Psoas muscle (tissue), 8 donors: ENCODE measurements at regions of chr3 and their contacts with region 1.

Region 1: GRCh38 chr3:10370429-10370828 is 49.5 kb upstream of the SEC13 start:
- DNase-seq: peak in 1 of 2 donors; percentile 52
- ATAC-seq: no peak
- H3K4me3 ChIP-seq: no peak overlapping the region
- H3K27ac ChIP-seq: no peak overlapping the region
- H3K4me1 ChIP-seq: peaks cover 10% of the 10 kb centered on the region
- H3K27me3 ChIP-seq: no peaks in the 10 kb centered on the region
- CTCF ChIP-seq: no peak

Region 2: GRCh38 chr3:10337323-10338163 is 32.9 kb before region 1 on chr3:
- intact Hi-C with region 1: loop called in 1 of 2 experiments (anchors 5 kb)
- DNase-seq: peak in 1 of 2 donors; percentile 36
- ATAC-seq: no peak
- H3K4me3 ChIP-seq: no peak overlapping the region
- H3K27ac ChIP-seq: no peak overlapping the region
- H3K4me1 ChIP-seq: peaks cover 27% of the 10 kb centered on the region
- H3K27me3 ChIP-seq: no peaks in the 10 kb centered on the region
- CTCF ChIP-seq: no peak